ENCODE measurements at regions of chr6 and their contacts with region 1.

Region 1: DNA sequence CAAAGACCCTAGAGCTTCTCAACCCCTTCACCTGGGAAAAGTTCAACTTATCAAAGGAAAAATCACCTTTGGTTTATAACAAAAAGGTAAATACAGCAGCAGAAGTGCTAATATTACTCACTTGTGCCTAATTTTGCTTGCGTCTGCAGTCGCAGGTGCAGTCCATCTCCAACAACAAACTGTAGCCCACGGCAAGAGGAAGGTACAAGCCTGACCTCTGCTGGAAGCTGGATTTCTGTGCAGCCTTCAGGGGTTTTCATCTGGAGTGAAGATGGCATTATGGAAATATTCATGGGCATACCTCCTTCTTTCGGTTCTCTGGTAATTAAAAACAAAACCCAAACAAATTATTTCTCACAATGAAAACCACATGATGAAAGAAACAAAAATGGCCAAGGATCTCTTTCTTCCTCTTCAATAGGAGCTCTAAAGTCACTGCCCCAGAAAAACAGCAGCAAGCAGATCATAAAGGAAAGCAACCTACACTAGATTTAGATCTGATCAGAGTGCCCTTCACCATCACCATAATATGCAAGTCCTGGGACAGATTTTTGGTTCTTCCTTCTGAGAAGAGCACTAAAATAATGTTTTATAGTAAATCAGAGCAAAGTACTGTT is 7.8 kb downstream of the UBE3D start:
- DNase-seq: no peak
- ATAC-seq: peak; percentile 82
- H3K4me3 ChIP-seq: no peak overlapping the region
- H3K27ac ChIP-seq: no peak overlapping the region
- H3K4me1 ChIP-seq: no peaks in the 10 kb centered on the region
- H3K27me3 ChIP-seq: no peaks in the 10 kb centered on the region
- CTCF ChIP-seq: peak; percentile 63

Region 2: DNA sequence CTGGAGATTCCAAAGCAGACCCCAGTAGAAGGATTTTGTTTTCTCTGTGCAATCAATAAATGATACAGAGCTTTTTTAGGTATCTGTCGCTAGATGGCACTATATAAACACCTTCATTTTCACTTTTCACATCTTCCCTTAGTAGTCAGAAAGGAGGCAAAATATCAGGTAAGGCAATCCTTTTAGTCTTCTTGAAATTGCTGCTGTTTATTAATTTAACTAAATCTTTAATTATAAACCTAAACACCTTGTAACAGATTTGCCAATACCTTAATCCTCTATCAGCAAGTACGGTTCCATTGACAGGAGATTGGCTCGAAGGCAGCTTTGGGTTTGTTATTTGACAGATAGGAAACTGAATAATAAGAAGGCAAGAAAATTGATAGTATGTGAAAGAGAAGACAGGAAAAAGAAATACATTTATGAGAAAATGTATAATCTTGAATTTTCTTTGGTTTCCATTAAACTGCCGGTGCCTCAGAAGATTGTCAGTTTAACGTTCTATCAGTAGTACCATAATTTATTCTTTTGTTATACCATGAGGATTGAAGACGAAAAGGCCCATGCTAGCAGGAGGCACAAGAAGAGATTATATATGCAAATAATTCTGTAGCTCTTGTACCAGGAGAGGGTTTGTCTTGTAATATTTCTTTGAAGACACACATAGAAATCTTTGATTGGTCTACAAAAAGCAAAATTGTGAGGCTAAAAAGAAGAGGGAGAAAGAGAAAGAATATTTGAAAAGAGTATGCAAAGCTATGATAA is 786.8 kb before region 1 on chr6:
- intact Hi-C with region 1: loop called (anchors 10 kb)
- DNase-seq: no peak
- ATAC-seq: peak; percentile 72
- H3K4me3 ChIP-seq: no peak overlapping the region
- H3K27ac ChIP-seq: no peak overlapping the region
- H3K4me1 ChIP-seq: no peaks in the 10 kb centered on the region
- H3K27me3 ChIP-seq: no peaks in the 10 kb centered on the region
- CTCF ChIP-seq: peak; percentile 65

Region 3: GRCh38 chr6:82842721-82843120 is 215.1 kb before region 1 on chr6:
- intact Hi-C with region 1: no loop called
- DNase-seq: no peak
- ATAC-seq: no peak
- H3K4me3 ChIP-seq: no peak overlapping the region
- H3K27ac ChIP-seq: no peak overlapping the region
- H3K4me1 ChIP-seq: no peaks in the 10 kb centered on the region
- H3K27me3 ChIP-seq: no peaks in the 10 kb centered on the region
- CTCF ChIP-seq: no peak

Region 4: GRCh38 chr6:82861121-82861520 is 196.7 kb before region 1 on chr6:
- intact Hi-C with region 1: no loop called
- DNase-seq: no peak
- ATAC-seq: no peak
- H3K4me3 ChIP-seq: no peak overlapping the region
- H3K27ac ChIP-seq: no peak overlapping the region
- H3K4me1 ChIP-seq: no peaks in the 10 kb centered on the region
- H3K27me3 ChIP-seq: no peaks in the 10 kb centered on the region
- CTCF ChIP-seq: no peak

Region 5: GRCh38 chr6:82951396-82951795 is 106.4 kb before region 1 on chr6:
- intact Hi-C with region 1: no loop called
- DNase-seq: no peak
- ATAC-seq: peak; percentile 94
- H3K4me3 ChIP-seq: no peak overlapping the region
- H3K27ac ChIP-seq: no peak overlapping the region
- H3K4me1 ChIP-seq: no peaks in the 10 kb centered on the region
- H3K27me3 ChIP-seq: no peaks in the 10 kb centered on the region
- CTCF ChIP-seq: no peak